ENCODE measurements at regions of chr4 and their contacts with region 1.

Region 1: GRCh38 chr4:85370430-85371032 is 104.4 kb upstream of the ARHGAP24 start:
- DNase-seq: peak; percentile 42 to 43
- H3K4me3 ChIP-seq: no peak overlapping the region
- H3K4me3 Mint-ChIP-seq: no peak overlapping the region
- H3K27ac Mint-ChIP-seq: no peak overlapping the region
- H3K4me1 ChIP-seq: no peaks in the 10 kb centered on the region
- H3K4me1 Mint-ChIP-seq: no peaks in the 10 kb centered on the region
- H3K27me3 ChIP-seq: no peaks in the 10 kb centered on the region
- H3K27me3 Mint-ChIP-seq: peaks cover 7% of the 10 kb centered on the region
- CTCF ChIP-seq: peak; percentile 54 to 73

Region 2: GRCh38 chr4:85084380-85085094 is 286.0 kb before region 1 on chr4:
- CTCF ChIA-PET with region 1: no interaction called
- POLR2A ChIA-PET with region 1: no interaction called
- intact Hi-C with region 1: loop called (anchors 1 kb)
- DNase-seq: peak in 1 of 2 experiments; percentile 62
- H3K4me3 ChIP-seq: no peak overlapping the region
- H3K4me3 Mint-ChIP-seq: no peak overlapping the region
- H3K27ac Mint-ChIP-seq: no peak overlapping the region
- H3K4me1 ChIP-seq: no peaks in the 10 kb centered on the region
- H3K4me1 Mint-ChIP-seq: no peaks in the 10 kb centered on the region
- H3K27me3 ChIP-seq: no peaks in the 10 kb centered on the region; the same call in 1 of the 2 replicates
- H3K27me3 Mint-ChIP-seq: peaks cover 4% of the 10 kb centered on the region
- CTCF ChIP-seq: peak; percentile 53 to 68

Region 3: GRCh38 chr4:85807247-85807950 is 436.9 kb after region 1 on chr4:
- CTCF ChIA-PET with region 1: no interaction called
- POLR2A ChIA-PET with region 1: no interaction called
- intact Hi-C with region 1: no loop called
- DNase-seq: no peak
- H3K4me3 ChIP-seq: no peak overlapping the region
- H3K4me3 Mint-ChIP-seq: no peak overlapping the region
- H3K27ac Mint-ChIP-seq: no peak overlapping the region
- H3K4me1 ChIP-seq: no peaks in the 10 kb centered on the region
- H3K4me1 Mint-ChIP-seq: no peaks in the 10 kb centered on the region
- H3K27me3 ChIP-seq: no peaks in the 10 kb centered on the region
- H3K27me3 Mint-ChIP-seq: peaks cover 6% of the 10 kb centered on the region
- CTCF ChIP-seq: no peak